ENCODE measurements at regions of chr15 and their contacts with region 1.

Region 1: DNA sequence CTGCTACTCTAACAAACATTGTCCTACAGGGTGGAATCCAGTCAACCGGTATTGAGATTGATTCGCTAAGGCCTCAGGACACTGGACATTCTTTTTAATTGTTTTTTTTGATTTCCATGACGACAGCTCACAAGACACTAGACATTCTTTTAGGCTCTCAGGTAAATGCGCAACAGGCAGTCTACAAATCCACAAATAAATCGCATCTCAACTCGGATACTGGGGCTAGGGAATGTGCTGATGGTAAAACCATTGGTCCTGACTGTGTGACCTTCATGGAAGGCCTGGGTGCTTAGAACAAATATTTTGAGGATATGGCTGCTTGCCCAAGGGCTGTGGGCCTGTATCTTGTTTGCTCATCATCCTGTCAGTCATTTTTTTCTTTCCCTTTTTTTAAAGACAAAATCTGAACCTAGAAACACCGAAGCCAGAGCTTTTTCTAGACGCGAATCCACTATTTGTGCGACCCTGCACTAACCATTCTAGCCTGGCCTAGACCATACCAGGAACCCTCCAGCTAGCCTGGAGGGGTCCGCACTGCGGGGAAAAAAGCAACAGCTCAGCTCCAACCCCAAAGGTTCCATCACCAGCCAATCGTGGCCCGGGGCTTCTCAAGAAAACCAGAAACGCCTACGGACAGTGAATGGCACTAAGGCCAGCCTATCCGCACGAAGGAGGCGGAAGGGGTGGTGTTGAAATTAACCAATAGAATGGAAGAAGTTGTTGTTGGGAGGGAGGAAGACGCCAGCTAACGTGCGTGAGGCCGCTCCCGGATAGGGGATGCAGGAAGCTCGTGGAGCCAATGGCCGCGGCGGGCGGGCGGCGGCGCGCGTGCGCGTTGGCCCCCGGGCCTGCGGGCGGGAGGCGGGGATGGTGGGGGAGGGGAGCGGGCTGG is 18.1 kb upstream of the CHD2 start:
- DNase-seq: peak; percentile 99

Region 2: GRCh38 chr15:92821491-92822080 is 60.5 kb before region 1 on chr15:
- intact Hi-C with region 1: no loop called
- DNase-seq: no peak

Region 3: GRCh38 chr15:92831655-92832328 is 50.3 kb before region 1 on chr15:
- intact Hi-C with region 1: loop called in 1 of 2 experiments (anchors 5 kb)
- DNase-seq: peak; percentile 94

Region 4: GRCh38 chr15:92845126-92845508 is 36.9 kb before region 1 on chr15:
- intact Hi-C with region 1: no loop called
- DNase-seq: no peak